Mammary epithelial cell (primary cell): ENCODE measurements at regions of chr9 and their contacts with region 1.

Region 1: GRCh38 chr9:14779566-14780022 is 57.1 kb upstream of the CER1 start:
- DNase-seq: no peak
- H3K4me3 ChIP-seq: no peak overlapping the region
- H3K27ac ChIP-seq: no peak overlapping the region
- H3K4me1 ChIP-seq: no peaks in the 10 kb centered on the region
- H3K27me3 ChIP-seq: no peaks in the 10 kb centered on the region
- CTCF ChIP-seq: no peak

Region 2: GRCh38 chr9:13552606-13553215 is 1226.9 kb before region 1 on chr9:
- CTCF ChIA-PET with region 1: no interaction called
- dilution Hi-C with region 1: no loop called
- in situ Hi-C with region 1: no loop called
- intact Hi-C with region 1: no loop called
- DNase-seq: no peak
- H3K4me3 ChIP-seq: no peak overlapping the region
- H3K27ac ChIP-seq: no peak overlapping the region
- H3K4me1 ChIP-seq: no peaks in the 10 kb centered on the region
- H3K27me3 ChIP-seq: peaks cover 2% of the 10 kb centered on the region
- CTCF ChIP-seq: no peak

Region 3: DNA sequence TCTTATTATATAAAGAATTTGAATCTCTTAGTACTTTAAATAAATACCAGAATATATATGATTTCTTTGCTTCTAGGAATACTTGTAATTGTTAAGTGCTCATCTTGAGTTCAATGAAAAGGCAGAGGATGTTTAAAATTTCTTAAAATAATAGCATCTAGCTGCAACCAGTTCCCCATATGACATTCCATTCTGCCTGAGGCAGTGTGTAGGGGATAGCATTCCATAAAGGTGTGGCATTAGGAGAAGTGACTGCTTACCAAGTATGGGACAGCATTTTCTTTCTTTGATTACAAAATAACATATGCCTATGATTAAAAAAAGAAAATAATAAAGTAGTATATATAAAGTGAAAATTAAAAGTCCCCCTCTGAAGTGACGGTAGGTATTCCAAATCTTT is 302.6 kb before region 1 on chr9:
- CTCF ChIA-PET with region 1: interaction called, 10 read pairs
- dilution Hi-C with region 1: no loop called
- in situ Hi-C with region 1: no loop called
- intact Hi-C with region 1: no loop called
- DNase-seq: no peak
- H3K4me3 ChIP-seq: no peak overlapping the region
- H3K27ac ChIP-seq: no peak overlapping the region
- H3K4me1 ChIP-seq: no peaks in the 10 kb centered on the region
- H3K27me3 ChIP-seq: no peaks in the 10 kb centered on the region
- CTCF ChIP-seq: no peak

Region 4: DNA sequence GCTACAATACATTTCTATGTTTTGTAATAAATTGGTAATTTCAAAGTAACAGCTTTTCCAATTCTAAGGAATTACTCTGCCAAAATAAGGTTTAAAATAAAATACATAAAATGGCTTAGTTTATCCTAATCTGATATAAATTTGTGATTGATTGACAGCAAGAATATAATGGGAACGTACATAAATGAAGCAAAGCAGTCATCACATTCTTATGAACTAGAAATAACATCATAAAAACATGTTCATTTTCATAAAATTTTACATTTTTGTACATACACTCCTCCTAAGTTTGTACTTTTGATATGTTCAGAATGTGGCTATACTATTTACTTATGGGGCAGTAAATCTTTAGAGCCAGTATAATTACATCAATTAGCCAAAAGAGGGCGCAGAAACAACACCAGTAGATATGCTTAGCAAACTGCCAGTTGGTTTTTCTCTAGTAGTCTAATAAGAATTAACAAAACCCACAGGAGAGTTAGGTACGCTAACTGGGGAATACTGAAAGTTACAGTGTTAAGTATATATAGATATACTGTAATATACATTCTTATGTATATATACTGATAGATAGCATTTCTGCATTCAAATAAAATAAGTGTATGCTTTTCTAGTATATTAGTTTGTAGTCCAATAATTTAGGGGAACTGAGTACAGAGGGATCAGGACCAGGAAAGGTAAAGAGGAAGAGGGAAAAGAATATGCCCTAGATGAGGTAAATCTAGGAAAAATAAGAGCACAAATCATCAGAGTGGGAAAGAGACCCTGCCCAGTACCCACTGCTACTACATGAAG is 163.2 kb before region 1 on chr9:
- CTCF ChIA-PET with region 1: no interaction called
- dilution Hi-C with region 1: no loop called
- in situ Hi-C with region 1: loop called in 1 of 2 experiments (anchors 10 kb)
- intact Hi-C with region 1: no loop called
- DNase-seq: peak; percentile 34
- H3K4me3 ChIP-seq: no peak overlapping the region
- H3K27ac ChIP-seq: no peak overlapping the region
- H3K4me1 ChIP-seq: no peaks in the 10 kb centered on the region
- H3K27me3 ChIP-seq: no peaks in the 10 kb centered on the region
- CTCF ChIP-seq: peak; percentile 62 to 72